ENCODE measurements at regions of chr16 and their contacts with region 1.

Region 1: GRCh38 chr16:66894948-66895688 is 14.8 kb downstream of the PDP2 start:
- DNase-seq: peak; percentile 76
- H3K4me3 ChIP-seq: no peak overlapping the region; a peak in 1 of 4 replicates
- H3K27ac ChIP-seq: no peak overlapping the region
- H3K4me1 ChIP-seq: peaks cover 9 to 11% of the 10 kb centered on the region in 2 experiments; a peak in 3 of 4 replicates
- H3K27me3 ChIP-seq: no peaks in the 10 kb centered on the region
- CTCF ChIP-seq: peak; percentile 89
- EP300 ChIP-seq: no peak
- RAD21 ChIP-seq: peak; percentile 98

Region 2: GRCh38 chr16:66859397-66860068 is 35.6 kb before region 1 on chr16:
- CTCF ChIA-PET with region 1: no interaction called
- POLR2A ChIA-PET with region 1: no interaction called
- DNase-seq: no peak
- H3K4me3 ChIP-seq: no peak overlapping the region
- H3K27ac ChIP-seq: no peak overlapping the region; a peak in 1 of 4 replicates
- H3K4me1 ChIP-seq: peaks cover 7 to 12% of the 10 kb centered on the region in 2 experiments; a peak in 2 of 4 replicates
- H3K27me3 ChIP-seq: no peaks in the 10 kb centered on the region
- CTCF ChIP-seq: no peak
- EP300 ChIP-seq: no peak
- RAD21 ChIP-seq: no peak

Region 3: DNA sequence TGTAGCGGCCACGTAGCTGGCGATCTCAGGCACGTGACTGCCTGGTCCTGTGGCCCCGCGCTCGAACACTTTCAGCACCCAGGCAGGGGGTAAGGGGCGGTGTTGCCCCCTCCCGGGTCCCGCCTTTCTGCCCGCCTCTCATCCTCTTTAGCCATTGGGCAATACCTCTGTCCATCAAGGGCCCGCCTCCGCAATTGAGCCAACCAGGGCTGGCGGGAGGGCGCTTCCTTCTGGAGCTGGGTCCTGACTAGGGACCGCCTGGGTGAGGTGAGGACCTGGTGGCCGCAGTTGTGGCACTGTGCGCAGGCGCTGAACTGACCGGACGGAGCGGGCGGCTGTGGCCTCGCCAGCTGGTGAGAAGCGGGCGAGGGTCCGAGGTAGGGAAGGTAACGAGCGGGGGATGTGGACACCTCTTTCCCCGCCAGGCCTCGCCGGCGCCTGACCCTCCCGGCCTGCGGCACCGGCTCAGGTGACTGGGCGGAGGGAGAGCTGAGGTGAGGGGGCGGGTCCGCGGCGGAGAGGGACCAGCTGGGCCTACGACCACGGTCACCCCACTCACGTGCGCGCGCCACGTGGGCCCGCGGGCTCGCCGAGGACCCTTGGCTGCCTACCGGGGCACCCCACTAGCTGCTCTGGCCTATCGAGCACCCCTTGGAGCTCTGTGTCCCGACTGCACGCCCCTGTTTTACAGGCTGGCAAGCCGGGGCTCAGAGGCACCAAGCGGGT is 14.7 kb before region 1 on chr16 and contains the start of gene PDP2:
- CTCF ChIA-PET with region 1: interaction called, 25 read pairs
- POLR2A ChIA-PET with region 1: interaction called, 4 read pairs
- DNase-seq: peak; percentile 99
- H3K4me3 ChIP-seq: peak within 1 kb of the TSS; percentile 74 to 95
- H3K27ac ChIP-seq: peak within 1 kb of the TSS in 1 of 2 experiments; percentile 29; a peak in 1 of 4 replicates
- H3K4me1 ChIP-seq: peaks cover 0 to 7% of the 10 kb centered on the region in 2 experiments; a peak in 1 of 4 replicates
- H3K27me3 ChIP-seq: no peaks in the 10 kb centered on the region
- CTCF ChIP-seq: no peak
- EP300 ChIP-seq: no peak
- RAD21 ChIP-seq: no peak
- polyA plus RNA-seq, gene PDP2: 4.7 and 7.3 TPM in 2 replicates

Region 4: GRCh38 chr16:66911112-66911511 is 16.0 kb after region 1 on chr16:
- CTCF ChIA-PET with region 1: interaction called, 174 read pairs
- POLR2A ChIA-PET with region 1: no interaction called
- DNase-seq: no peak
- H3K4me3 ChIP-seq: no peak overlapping the region
- H3K27ac ChIP-seq: no peak overlapping the region
- H3K4me1 ChIP-seq: no peaks in the 10 kb centered on the region
- H3K27me3 ChIP-seq: no peaks in the 10 kb centered on the region
- CTCF ChIP-seq: no peak
- EP300 ChIP-seq: no peak
- RAD21 ChIP-seq: no peak

Region 5: GRCh38 chr16:66934153-66934838 is 39.2 kb after region 1 on chr16 and contains the start of gene CIAO2B:
- CTCF ChIA-PET with region 1: interaction called, 174 read pairs
- POLR2A ChIA-PET with region 1: no interaction called
- DNase-seq: peak; percentile 95
- H3K4me3 ChIP-seq: peak within 1 kb of the TSS; percentile 85 to 88
- H3K27ac ChIP-seq: peak within 1 kb of the TSS; percentile 82 to 85
- H3K4me1 ChIP-seq: peaks cover 7 to 24% of the 10 kb centered on the region in 2 experiments; a peak in 2 of 4 replicates
- H3K27me3 ChIP-seq: no peaks in the 10 kb centered on the region
- CTCF ChIP-seq: no peak
- EP300 ChIP-seq: no peak
- RAD21 ChIP-seq: no peak
- polyA plus RNA-seq, gene CIAO2B: 577 and 665 TPM in 2 replicates

Region 6: DNA sequence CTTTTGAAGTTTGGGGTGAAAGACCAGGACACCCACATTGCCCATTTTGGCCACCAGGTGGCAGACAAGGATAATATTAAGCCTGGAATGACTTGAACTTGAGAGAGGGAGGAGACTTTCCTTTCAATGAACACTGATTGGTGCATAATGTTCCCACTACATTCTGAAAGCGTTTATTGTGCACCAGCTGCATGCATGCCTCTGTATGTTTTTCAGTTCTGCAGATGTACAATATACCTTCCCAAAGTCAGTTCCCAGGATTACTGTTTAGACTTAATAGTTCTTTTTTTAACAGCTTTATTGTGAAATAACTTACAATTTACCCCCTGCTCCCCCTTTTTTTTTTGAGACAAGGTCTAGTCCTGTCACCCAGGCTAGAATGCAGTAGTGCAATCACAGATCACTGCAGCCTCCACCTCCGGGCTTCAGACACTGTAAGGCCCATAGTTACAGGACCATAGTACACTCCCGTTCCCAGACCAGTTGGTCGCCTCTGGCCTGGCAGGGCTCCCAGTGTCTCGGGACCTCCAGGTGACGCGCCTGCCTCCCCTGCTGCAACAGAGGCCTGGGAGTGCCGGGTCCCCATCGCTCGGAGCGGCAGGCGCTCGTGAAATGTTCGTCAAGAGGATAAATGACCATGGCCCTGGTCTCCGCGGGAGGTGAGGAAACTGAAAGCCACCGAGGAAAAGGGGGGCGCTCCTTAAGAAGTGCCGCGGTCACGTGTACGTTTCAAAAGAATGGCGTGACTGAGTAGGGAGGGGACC is 52.4 kb after region 1 on chr16:
- CTCF ChIA-PET with region 1: interaction called, 20 read pairs
- POLR2A ChIA-PET with region 1: no interaction called
- DNase-seq: peak; percentile 88
- H3K4me3 ChIP-seq: peak overlapping the region; percentile 45 to 57
- H3K27ac ChIP-seq: no peak overlapping the region
- H3K4me1 ChIP-seq: peaks cover 0 to 8% of the 10 kb centered on the region in 2 experiments; a peak in 1 of 4 replicates
- H3K27me3 ChIP-seq: no peaks in the 10 kb centered on the region
- CTCF ChIP-seq: peak; percentile 91
- EP300 ChIP-seq: no peak
- RAD21 ChIP-seq: peak; percentile 80

Measured in SK-N-SH (cell line).